ENCODE measurements at regions of chr19 and their contacts with region 1.

Region 1: DNA sequence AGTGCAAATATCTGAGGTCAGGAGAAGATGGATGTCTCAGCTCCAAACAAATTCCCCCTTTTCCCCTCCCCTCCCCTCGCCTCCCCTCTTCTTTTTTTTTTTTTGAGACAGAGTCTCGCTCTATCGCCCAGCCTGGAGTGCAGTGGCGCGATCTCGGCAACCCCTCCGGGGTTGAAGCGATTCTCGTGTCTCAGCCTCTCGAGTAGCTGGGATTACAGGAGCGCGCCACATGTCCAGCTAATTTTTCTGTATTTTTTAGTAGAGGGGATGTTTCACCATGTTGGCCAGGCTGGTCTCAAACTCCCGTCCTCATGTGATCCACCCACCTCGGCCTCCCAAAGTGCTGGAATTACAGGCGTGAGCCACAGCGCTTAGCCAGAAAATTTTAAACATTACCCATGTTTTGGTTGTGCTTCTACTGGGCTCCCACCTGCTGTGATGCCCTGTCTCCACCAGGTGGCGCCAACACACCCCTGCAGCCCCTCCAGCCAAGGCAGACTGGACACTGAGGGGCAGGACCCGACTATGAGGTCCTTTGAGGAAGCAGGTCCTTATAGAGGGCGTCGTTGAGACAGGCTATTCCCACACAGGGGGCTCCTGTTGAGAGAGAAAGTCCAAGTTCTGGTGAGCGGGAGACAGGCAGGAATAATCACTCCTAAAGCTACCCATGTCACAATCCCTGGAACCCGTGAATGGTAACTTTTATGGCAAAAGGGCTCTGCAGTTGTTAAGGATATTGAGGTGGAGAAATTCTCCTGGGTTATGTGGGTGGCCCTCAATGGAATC is 6.3 kb downstream of the ERICH4 start:
- DNase-seq: peak; percentile 76
- H3K4me3 Mint-ChIP-seq: peak overlapping the region; percentile 61
- H3K27ac Mint-ChIP-seq: peak overlapping the region; percentile 18
- H3K4me1 Mint-ChIP-seq: peaks cover 29% of the 10 kb centered on the region
- H3K27me3 Mint-ChIP-seq: peaks cover 7% of the 10 kb centered on the region

Region 2: GRCh38 chr19:41392775-41393174 is 56.5 kb before region 1 on chr19:
- CTCF ChIA-PET with region 1: no interaction called
- POLR2A ChIA-PET with region 1: no interaction called
- DNase-seq: no peak
- H3K4me3 Mint-ChIP-seq: no peak overlapping the region
- H3K27ac Mint-ChIP-seq: no peak overlapping the region
- H3K4me1 Mint-ChIP-seq: peaks cover 21% of the 10 kb centered on the region
- H3K27me3 Mint-ChIP-seq: no peaks in the 10 kb centered on the region

Region 3: GRCh38 chr19:41426952-41427646 is 22.2 kb before region 1 on chr19 and contains the start of gene B3GNT8:
- CTCF ChIA-PET with region 1: interaction called, 11 read pairs
- POLR2A ChIA-PET with region 1: no interaction called
- DNase-seq: peak; percentile 67
- H3K4me3 Mint-ChIP-seq: peak within 1 kb of the TSS; percentile 80
- H3K27ac Mint-ChIP-seq: peak within 1 kb of the TSS; percentile 81
- H3K4me1 Mint-ChIP-seq: peaks cover 45% of the 10 kb centered on the region
- H3K27me3 Mint-ChIP-seq: no peaks in the 10 kb centered on the region
- total RNA-seq, gene B3GNT8: 4.3 to 5.4 TPM

Region 4: GRCh38 chr19:41541990-41542584 is 92.8 kb after region 1 on chr19:
- CTCF ChIA-PET with region 1: interaction called, 46 read pairs
- POLR2A ChIA-PET with region 1: interaction called, 3 read pairs
- DNase-seq: peak; percentile 86
- H3K4me3 Mint-ChIP-seq: peak overlapping the region; percentile 18
- H3K27ac Mint-ChIP-seq: peak overlapping the region; percentile 8
- H3K4me1 Mint-ChIP-seq: peaks cover 58% of the 10 kb centered on the region
- H3K27me3 Mint-ChIP-seq: no peaks in the 10 kb centered on the region

Region 5: DNA sequence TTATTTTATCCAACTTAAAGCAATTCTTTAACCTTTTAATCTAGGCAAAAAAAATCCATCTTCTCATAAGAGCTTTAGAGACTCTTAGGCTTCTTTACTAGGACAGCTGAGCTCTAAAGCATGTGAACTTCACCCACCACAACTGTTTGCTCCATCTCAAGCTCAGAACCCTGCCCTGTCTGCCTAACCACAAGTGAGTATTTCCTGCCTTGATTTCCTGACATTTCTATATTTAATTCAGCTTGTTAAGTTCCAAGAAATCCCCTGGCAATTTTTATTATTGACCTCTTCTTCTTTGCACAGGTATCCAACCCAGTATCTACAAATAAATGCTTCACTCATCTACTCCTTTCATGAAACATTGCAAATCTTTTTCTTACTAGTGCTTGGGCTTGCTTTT is 105.6 kb after region 1 on chr19:
- CTCF ChIA-PET with region 1: interaction called, 71 read pairs
- POLR2A ChIA-PET with region 1: interaction called, 11 read pairs
- DNase-seq: peak; percentile 64
- H3K4me3 Mint-ChIP-seq: peak overlapping the region; percentile 58
- H3K27ac Mint-ChIP-seq: peak overlapping the region; percentile 99
- H3K4me1 Mint-ChIP-seq: peaks cover 68% of the 10 kb centered on the region
- H3K27me3 Mint-ChIP-seq: no peaks in the 10 kb centered on the region

Region 6: DNA sequence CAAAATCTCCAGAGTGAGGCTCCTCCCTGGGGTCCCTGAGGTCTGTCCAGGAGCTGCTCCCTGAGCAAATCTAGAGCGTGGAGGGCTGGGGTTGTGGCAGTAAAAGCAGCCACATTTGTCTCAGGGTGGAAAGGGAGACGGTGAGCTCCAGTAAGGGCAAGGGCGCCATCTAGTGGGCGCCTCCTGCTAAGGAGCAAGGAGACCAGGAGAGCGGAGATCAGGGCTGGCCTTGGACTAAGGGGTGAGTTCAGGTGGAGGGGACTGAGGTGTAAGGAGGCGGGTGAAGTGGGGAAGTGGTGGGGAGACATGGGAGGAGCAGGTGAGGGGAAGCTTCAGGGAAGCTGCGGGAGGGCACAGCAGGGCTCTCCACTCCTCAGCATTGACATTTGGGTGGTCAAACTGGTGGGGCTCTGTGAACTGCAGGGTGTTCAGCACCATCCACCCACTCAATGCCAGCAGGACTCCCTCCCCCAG is 121.4 kb after region 1 on chr19:
- CTCF ChIA-PET with region 1: interaction called, 91 read pairs
- POLR2A ChIA-PET with region 1: interaction called, 4 read pairs
- DNase-seq: peak; percentile 87
- H3K4me3 Mint-ChIP-seq: no peak overlapping the region
- H3K27ac Mint-ChIP-seq: no peak overlapping the region
- H3K4me1 Mint-ChIP-seq: peaks cover 31% of the 10 kb centered on the region
- H3K27me3 Mint-ChIP-seq: no peaks in the 10 kb centered on the region

Region 7: GRCh38 chr19:41597600-41598041 is 148.3 kb after region 1 on chr19:
- CTCF ChIA-PET with region 1: interaction called, 60 read pairs
- POLR2A ChIA-PET with region 1: interaction called, 3 read pairs
- DNase-seq: peak; percentile 80
- H3K4me3 Mint-ChIP-seq: no peak overlapping the region
- H3K27ac Mint-ChIP-seq: no peak overlapping the region
- H3K4me1 Mint-ChIP-seq: peaks cover 15% of the 10 kb centered on the region
- H3K27me3 Mint-ChIP-seq: peaks cover 27% of the 10 kb centered on the region

Measured in activated CD4-positive, alpha-beta memory T cell treated with anti-CD3 and anti-CD28 coated beads, Interleukin-2, amount 10 ng/mL, durations not matched to agents 7 days and 5 days (primary cell).